Activated naive CD8-positive, alpha-beta T cell treated with anti-CD3 and anti-CD28 coated beads, Interleukin-2, amount 10 ng/mL, durations not matched to agents 7 days and 5 days (primary cell): ENCODE measurements at regions of chr15 and their contacts with region 1.

Region 1: DNA sequence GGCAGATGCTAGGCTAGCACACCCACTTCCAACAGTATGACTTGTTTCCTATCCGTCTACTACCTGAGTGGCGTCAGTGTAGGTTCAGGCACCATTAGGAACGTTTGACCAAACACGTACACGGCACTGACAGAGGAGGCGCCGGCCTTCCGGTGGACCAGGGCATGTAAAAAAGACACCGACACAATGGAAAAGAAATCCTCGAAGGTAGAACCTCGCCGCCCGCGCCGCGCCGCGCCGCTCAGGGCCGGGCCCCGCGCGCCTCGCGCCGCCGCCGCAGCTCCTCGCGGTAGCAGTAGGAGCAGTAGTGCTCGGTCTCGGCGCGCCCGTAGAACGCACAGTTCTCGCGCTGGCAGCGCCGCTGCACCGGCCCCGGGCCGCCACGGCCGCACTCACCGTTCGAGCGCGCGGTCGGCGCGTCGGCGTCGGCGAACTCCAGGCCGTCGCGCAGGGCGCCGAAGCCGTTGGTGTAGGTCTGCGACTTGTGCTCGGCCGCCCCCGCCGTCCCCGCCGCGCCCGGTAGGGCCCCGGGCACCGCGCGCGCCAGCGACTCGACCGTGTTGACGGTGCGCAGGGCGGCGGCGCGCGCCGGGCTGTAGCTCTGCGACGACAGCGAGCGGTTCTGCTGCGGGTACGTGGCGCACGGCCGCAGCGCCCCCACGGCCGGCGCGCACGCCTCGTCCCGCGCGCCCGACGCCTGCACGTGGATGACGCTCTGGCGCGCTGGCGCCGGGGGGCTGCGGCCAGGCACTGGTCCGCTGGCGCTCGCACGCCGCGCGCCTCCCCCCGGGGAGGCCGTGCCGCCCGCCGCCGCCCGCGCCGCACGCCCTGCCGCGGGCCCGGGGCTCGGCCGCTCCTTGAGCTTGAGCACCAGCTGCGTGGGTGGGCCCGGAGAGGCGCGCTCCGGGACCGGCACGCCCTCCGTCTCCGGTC is 156.7 kb downstream of the KLF13 start:
- DNase-seq: peak; percentile 73
- ATAC-seq: peak; percentile 56
- H3K4me3 Mint-ChIP-seq: peak overlapping the region; percentile 97
- H3K27ac Mint-ChIP-seq: peak overlapping the region; percentile 95
- H3K4me1 Mint-ChIP-seq: peaks cover 48% of the 10 kb centered on the region
- H3K27me3 Mint-ChIP-seq: no peaks in the 10 kb centered on the region

Region 2: DNA sequence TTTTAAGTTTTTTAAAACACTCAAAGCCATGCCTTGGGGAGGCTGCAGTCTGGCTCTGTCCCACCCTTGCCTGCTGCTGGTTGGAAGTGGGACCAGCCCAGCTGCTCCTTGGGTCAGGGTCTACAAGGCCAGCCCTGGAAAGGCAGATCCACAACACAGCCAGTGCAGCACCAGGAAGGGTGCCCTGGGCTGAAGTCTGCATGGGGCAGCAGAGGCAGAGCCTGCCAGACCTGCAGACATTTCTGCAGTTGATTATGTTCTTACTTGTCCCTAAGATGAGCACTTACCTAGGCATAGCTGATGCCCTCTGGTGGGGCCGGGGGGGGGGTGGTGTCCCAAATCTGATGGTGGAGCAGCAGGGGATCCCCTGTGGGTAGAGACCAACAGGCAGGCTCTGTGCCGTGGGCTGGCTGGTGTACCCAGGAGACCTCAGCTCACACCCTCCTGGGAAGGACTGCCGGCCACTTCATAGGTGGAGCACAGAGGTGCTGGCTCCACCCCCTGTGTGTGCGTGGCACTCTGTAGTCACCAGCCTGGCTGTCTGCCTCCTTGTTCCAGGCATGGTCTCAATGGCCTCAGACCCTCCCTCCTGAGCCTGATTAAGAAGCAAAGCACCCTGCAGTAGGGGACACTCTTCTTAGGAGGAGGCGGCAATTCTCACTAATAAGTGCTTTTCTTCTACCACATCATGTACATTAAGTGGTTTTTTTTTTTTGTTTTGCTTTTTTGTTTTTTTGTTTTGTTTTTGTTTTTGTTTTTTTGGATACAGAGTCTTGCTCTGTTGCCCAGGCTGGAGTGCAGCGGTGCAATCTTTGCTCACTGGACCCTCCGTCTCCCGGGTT is 254.1 kb before region 1 on chr15:
- POLR2A ChIA-PET with region 1: no interaction called
- DNase-seq: no peak
- ATAC-seq: no peak
- H3K4me3 Mint-ChIP-seq: no peak overlapping the region
- H3K27ac Mint-ChIP-seq: no peak overlapping the region
- H3K4me1 Mint-ChIP-seq: peaks cover 6% of the 10 kb centered on the region
- H3K27me3 Mint-ChIP-seq: peaks cover 5% of the 10 kb centered on the region

Region 3: DNA sequence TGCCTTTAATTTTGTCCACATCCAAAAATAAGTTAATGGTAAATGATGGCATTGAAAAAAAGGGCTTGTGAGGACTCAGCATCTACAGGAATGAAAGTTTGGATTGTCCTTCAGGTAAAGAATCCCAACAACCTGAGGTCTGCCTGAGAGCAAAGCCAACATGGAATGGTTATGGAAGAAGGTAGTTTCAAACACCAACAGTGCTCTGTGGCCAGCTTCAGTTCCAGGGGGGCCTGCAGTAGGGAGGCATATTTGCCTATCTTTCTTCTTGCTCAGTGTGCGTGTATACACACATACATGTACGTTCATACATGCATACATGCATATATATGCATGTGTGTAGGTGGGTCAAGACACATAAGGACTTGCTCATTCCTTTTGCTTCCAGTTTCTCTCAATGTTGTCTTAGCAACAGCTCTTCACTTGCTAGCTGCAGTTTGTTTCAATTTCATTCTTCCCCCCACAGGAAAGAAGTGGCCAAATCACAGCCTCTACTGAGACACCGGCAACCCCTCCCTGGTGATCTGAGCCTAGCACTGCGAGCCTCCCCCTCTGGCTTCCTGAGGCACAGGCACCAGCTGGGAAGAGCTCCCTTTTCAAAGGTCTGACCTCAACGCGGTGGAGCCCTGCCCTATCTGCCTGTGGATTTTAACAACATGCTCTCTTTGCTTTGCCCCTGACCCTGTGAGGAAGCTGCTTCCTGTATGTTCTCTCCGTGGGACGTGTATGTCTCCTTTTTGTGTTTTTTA is 10.5 kb before region 1 on chr15:
- POLR2A ChIA-PET with region 1: interaction called, 30 read pairs
- DNase-seq: peak; percentile 60
- ATAC-seq: peak; percentile 89
- H3K4me3 Mint-ChIP-seq: peak overlapping the region; percentile 80
- H3K27ac Mint-ChIP-seq: peak overlapping the region; percentile 91
- H3K4me1 Mint-ChIP-seq: peaks cover 38% of the 10 kb centered on the region
- H3K27me3 Mint-ChIP-seq: no peaks in the 10 kb centered on the region